Activated naive CD4-positive, alpha-beta T cell treated with anti-CD3 and anti-CD28 coated beads, Interleukin-2, amount 10 ng/mL, durations not matched to agents 7 days and 5 days (primary cell): ENCODE measurements at regions of chrX and their contacts with region 1.

Region 1: GRCh38 chrX:119468930-119469635 is 839 bp downstream of the SLC25A5 start:
- DNase-seq: peak; percentile 92
- H3K4me3 Mint-ChIP-seq: peak overlapping the region; percentile 85
- H3K27ac Mint-ChIP-seq: peak overlapping the region; percentile 94
- H3K4me1 Mint-ChIP-seq: peaks cover 26% of the 10 kb centered on the region
- H3K27me3 Mint-ChIP-seq: peaks cover 3% of the 10 kb centered on the region

Region 2: GRCh38 chrX:119359618-119360382 is 109.3 kb before region 1 on chrX:
- CTCF ChIA-PET with region 1: no interaction called
- DNase-seq: no peak
- H3K4me3 Mint-ChIP-seq: no peak overlapping the region
- H3K27ac Mint-ChIP-seq: no peak overlapping the region
- H3K4me1 Mint-ChIP-seq: no peaks in the 10 kb centered on the region
- H3K27me3 Mint-ChIP-seq: no peaks in the 10 kb centered on the region

Region 3: GRCh38 chrX:119482481-119483480 is 13.7 kb after region 1 on chrX:
- CTCF ChIA-PET with region 1: interaction called, 14 read pairs
- DNase-seq: peak; percentile 70
- H3K4me3 Mint-ChIP-seq: peak overlapping the region; percentile 61
- H3K27ac Mint-ChIP-seq: peak overlapping the region; percentile 80
- H3K4me1 Mint-ChIP-seq: peaks cover 10% of the 10 kb centered on the region
- H3K27me3 Mint-ChIP-seq: peaks cover 4% of the 10 kb centered on the region